ENCODE measurements at regions of chr12 and their contacts with region 1.

Region 1: GRCh38 chr12:39764944-39765560 is 145.4 kb upstream of the ABCD2 start:
- DNase-seq: peak in 1 of 2 experiments; percentile 25
- H3K4me3 ChIP-seq: no peak overlapping the region
- H3K4me3 Mint-ChIP-seq: no peak overlapping the region
- H3K27ac Mint-ChIP-seq: no peak overlapping the region
- H3K4me1 ChIP-seq: no peaks in the 10 kb centered on the region
- H3K4me1 Mint-ChIP-seq: no peaks in the 10 kb centered on the region
- H3K27me3 ChIP-seq: no peaks in the 10 kb centered on the region
- H3K27me3 Mint-ChIP-seq: peaks cover 3% of the 10 kb centered on the region
- CTCF ChIP-seq: peak; percentile 76 to 88

Region 2: DNA sequence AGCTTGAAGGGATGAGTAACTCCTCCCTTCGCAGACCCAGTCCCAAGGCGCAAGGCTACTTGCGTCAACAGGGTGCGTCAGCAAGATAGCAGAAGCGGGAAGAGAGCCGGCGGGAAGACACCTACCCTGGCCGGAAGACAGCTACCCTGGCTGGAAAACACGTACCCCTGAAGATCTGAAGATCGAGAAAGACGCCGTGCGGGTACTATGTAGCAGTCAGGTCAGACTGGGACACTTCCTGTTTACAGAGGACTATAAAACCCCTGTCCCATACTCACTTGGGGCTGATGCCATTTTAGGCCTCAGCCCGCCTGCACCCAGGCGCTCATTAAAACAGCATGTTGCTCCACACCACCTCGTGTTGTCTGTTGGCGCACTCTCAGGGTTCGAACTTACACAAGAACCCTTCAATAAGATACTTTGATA is 226.4 kb before region 1 on chr12:
- CTCF ChIA-PET with region 1: no interaction called
- POLR2A ChIA-PET with region 1: no interaction called
- intact Hi-C with region 1: no loop called
- DNase-seq: no peak
- H3K4me3 ChIP-seq: no peak overlapping the region
- H3K4me3 Mint-ChIP-seq: no peak overlapping the region
- H3K27ac Mint-ChIP-seq: no peak overlapping the region
- H3K4me1 ChIP-seq: no peaks in the 10 kb centered on the region
- H3K4me1 Mint-ChIP-seq: no peaks in the 10 kb centered on the region
- H3K27me3 ChIP-seq: no peaks in the 10 kb centered on the region
- H3K27me3 Mint-ChIP-seq: no peaks in the 10 kb centered on the region
- CTCF ChIP-seq: no peak

Region 3: GRCh38 chr12:39831587-39832308 is 66.7 kb after region 1 on chr12:
- CTCF ChIA-PET with region 1: no interaction called
- POLR2A ChIA-PET with region 1: no interaction called
- intact Hi-C with region 1: loop called (anchors 5 kb)
- DNase-seq: peak in 1 of 2 experiments; percentile 18
- H3K4me3 ChIP-seq: no peak overlapping the region
- H3K4me3 Mint-ChIP-seq: no peak overlapping the region
- H3K27ac Mint-ChIP-seq: no peak overlapping the region
- H3K4me1 ChIP-seq: peaks cover 14% of the 10 kb centered on the region
- H3K4me1 Mint-ChIP-seq: no peaks in the 10 kb centered on the region
- H3K27me3 ChIP-seq: no peaks in the 10 kb centered on the region
- H3K27me3 Mint-ChIP-seq: no peaks in the 10 kb centered on the region
- CTCF ChIP-seq: no peak

Region 4: GRCh38 chr12:39958377-39958776 is 193.3 kb after region 1 on chr12:
- CTCF ChIA-PET with region 1: no interaction called
- POLR2A ChIA-PET with region 1: no interaction called
- intact Hi-C with region 1: loop called (anchors 1 kb)
- DNase-seq: peak in 1 of 2 experiments; percentile 32
- H3K4me3 ChIP-seq: no peak overlapping the region
- H3K4me3 Mint-ChIP-seq: no peak overlapping the region
- H3K27ac Mint-ChIP-seq: no peak overlapping the region
- H3K4me1 ChIP-seq: no peaks in the 10 kb centered on the region
- H3K4me1 Mint-ChIP-seq: no peaks in the 10 kb centered on the region
- H3K27me3 ChIP-seq: no peaks in the 10 kb centered on the region
- H3K27me3 Mint-ChIP-seq: peaks cover 3% of the 10 kb centered on the region
- CTCF ChIP-seq: peak; percentile 55 to 67

Region 5: DNA sequence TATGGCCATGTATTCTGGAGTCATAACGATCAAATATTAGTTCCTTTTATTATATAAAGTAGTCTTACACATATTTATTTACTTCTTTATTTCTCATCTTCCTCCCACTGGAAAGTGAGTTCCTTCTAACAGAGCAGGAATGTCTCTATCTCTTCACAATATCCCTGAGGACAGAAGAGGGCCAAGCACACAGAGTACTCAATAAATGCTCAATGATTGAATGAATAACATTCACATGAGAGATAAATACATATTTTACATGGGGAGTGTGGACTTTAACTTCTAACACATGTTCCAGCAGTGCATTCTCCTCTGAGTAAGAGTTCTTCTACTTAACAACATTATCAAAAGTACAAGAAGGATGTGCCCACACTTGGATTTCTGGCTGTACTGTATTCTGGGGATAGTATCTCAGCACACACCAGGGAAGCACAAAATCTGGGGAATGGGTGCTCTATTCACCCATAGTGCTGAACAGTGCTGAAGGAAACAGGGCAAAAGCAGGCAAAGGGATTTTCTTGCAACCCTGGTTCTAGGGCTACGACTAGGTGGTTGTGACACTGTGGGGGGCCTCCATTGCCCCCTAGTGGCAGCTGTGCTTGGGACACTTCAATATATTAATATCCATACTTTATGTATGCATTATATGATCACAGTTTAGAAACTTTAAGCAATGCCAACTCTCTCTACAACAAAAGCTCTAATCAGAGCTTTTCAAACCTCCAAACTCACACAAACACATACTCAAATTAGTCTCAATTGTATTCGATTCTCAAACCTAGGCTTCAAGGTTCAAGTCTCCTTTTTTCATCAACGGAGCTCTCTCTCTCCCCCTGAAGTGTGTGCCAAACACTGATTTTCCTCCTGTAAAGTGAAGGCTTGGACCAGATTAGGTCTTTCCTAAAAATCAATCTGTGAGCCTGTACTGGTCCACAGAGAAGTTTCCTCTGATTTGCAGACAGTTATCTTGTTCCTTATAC is 225.4 kb after region 1 on chr12:
- CTCF ChIA-PET with region 1: no interaction called
- POLR2A ChIA-PET with region 1: no interaction called
- intact Hi-C with region 1: loop called (anchors 1 kb)
- DNase-seq: peak; percentile 39 to 62
- H3K4me3 ChIP-seq: no peak overlapping the region
- H3K4me3 Mint-ChIP-seq: no peak overlapping the region
- H3K27ac Mint-ChIP-seq: no peak overlapping the region
- H3K4me1 ChIP-seq: no peaks in the 10 kb centered on the region
- H3K4me1 Mint-ChIP-seq: no peaks in the 10 kb centered on the region
- H3K27me3 ChIP-seq: no peaks in the 10 kb centered on the region
- H3K27me3 Mint-ChIP-seq: no peaks in the 10 kb centered on the region
- CTCF ChIP-seq: peak; percentile 78 to 88

Measured in Caco-2 (cell line).